Endothelial cell of umbilical vein (primary cell): ENCODE measurements at regions of chr16 and their contacts with region 1.

Region 1: GRCh38 chr16:89410794-89411309 is 79.5 kb downstream of the ANKRD11 start:
- DNase-seq: peak; percentile 97
- H3K4me3 ChIP-seq: no peak overlapping the region
- H3K27ac ChIP-seq: peak overlapping the region; percentile 39
- H3K4me1 ChIP-seq: peaks cover 52% of the 10 kb centered on the region
- H3K27me3 ChIP-seq: no peaks in the 10 kb centered on the region
- CTCF ChIP-seq: peak in 1 of 2 donors; percentile 52
- POLR2A ChIP-seq: peak; percentile 22

Region 2: DNA sequence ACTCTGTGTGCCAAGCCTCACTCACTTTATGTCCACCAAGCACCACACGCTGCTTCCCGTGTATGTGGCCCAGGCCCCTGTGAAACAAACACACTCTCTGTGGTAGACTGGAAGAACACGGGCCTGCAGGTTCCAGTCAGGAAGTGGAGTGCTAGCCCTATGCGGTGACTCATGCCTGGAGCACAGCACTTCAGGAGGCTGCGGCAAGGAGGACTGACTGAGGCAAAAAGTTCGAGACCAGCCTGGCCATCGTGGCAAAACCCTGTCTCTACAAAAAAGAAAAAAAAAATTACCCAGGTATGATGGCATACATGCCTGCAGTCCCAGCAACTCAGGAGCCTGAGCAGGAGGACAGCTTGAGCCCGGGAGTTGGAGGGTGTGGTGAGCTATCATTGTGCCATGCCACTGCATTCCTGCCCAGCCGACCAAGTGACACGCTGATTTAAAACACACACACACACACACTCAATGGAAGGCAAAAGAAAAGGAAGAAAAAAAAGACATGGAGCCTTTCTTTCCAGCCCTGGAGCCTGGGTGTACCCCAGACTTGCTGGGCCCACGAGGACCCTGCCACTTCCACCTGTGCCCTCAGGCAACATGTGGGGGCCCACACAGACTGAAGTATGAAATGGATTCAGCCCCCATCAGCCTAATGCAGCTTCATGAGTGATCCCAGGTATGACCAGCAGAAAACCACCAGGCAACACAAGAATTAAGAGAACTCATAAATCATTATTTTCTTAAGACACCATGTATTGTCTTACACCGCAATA is 47.0 kb before region 1 on chr16:
- CTCF ChIA-PET with region 1: no interaction called
- POLR2A ChIA-PET with region 1: no interaction called
- dilution Hi-C with region 1: no loop called
- intact Hi-C with region 1: loop called (anchors 2 kb)
- DNase-seq: peak; percentile 87
- H3K4me3 ChIP-seq: no peak overlapping the region
- H3K27ac ChIP-seq: peak overlapping the region; percentile 16
- H3K4me1 ChIP-seq: peaks cover 61% of the 10 kb centered on the region
- H3K27me3 ChIP-seq: no peaks in the 10 kb centered on the region
- CTCF ChIP-seq: no peak
- POLR2A ChIP-seq: no peak

Region 3: GRCh38 chr16:89422905-89423630 is 12.2 kb after region 1 on chr16:
- CTCF ChIA-PET with region 1: interaction called, 13 read pairs
- POLR2A ChIA-PET with region 1: interaction called, 3 read pairs
- dilution Hi-C with region 1: no loop called
- intact Hi-C with region 1: no loop called
- DNase-seq: no peak
- H3K4me3 ChIP-seq: peak overlapping the region in 1 of 3 experiments; percentile 37
- H3K27ac ChIP-seq: peak overlapping the region; percentile 85
- H3K4me1 ChIP-seq: peaks cover 42% of the 10 kb centered on the region
- H3K27me3 ChIP-seq: no peaks in the 10 kb centered on the region
- CTCF ChIP-seq: no peak
- POLR2A ChIP-seq: no peak

Region 4: GRCh38 chr16:89507834-89508590 is 97.2 kb after region 1 on chr16 and contains the start of gene SPG7:
- CTCF ChIA-PET with region 1: interaction called, 5 read pairs
- POLR2A ChIA-PET with region 1: no interaction called
- dilution Hi-C with region 1: no loop called
- intact Hi-C with region 1: loop called (anchors 5 kb)
- DNase-seq: peak; percentile 91
- H3K4me3 ChIP-seq: peak within 1 kb of the TSS; percentile 15 to 80 (median 65)
- H3K27ac ChIP-seq: peak within 1 kb of the TSS; percentile 89
- H3K4me1 ChIP-seq: peaks cover 28% of the 10 kb centered on the region
- H3K27me3 ChIP-seq: no peaks in the 10 kb centered on the region
- CTCF ChIP-seq: no peak
- POLR2A ChIP-seq: peak; percentile 86
- total RNA-seq, gene SPG7: 139 and 146 TPM in 2 replicates

Region 5: DNA sequence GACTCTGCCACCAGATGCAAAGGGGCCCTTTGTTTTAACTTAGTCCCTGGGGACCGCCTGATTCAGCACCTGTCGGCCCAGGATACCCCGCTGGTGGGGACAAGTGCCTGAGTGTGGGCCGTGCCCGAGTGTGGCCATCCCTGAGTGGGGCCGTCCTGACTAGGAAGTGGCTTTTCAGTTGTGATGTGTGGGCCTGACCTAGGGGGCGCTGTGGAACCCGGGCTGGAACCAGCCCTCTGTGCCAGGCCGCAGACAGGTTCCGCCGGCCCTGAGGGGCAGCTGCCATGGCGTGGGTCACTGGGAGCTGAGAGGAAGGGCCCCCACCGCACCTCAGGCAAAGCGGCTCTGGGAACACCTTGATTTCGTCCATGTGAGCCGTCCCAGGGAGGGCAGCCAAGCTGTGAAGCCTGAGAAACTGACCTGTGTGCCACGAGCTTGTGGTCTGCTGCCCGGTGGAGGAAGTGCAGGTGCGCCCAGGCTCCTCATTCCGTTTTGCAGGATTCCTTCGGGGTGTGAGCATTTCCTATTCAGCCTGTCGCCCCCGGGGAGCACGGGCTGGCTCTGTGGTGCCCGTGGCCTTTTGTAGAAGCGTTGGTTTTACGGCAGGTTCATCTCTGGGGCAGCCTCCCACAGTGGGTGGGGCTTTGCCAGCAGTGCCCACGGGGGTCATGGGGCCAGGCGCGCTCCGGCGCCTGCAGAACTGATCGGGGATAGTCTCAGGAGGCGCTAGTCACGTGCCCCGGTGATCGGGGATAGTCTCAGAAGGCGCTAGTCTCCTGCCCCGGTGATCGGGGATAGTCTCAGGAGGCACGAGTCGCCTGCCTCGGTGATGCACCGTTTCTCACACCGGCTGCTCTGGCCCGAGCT is 154.9 kb after region 1 on chr16:
- CTCF ChIA-PET with region 1: no interaction called
- POLR2A ChIA-PET with region 1: no interaction called
- dilution Hi-C with region 1: no loop called
- intact Hi-C with region 1: no loop called
- DNase-seq: peak; percentile 57
- H3K4me3 ChIP-seq: peak overlapping the region in 1 of 3 experiments; percentile 18
- H3K27ac ChIP-seq: no peak overlapping the region
- H3K4me1 ChIP-seq: peaks cover 42% of the 10 kb centered on the region
- H3K27me3 ChIP-seq: no peaks in the 10 kb centered on the region
- CTCF ChIP-seq: peak; percentile 75 to 83
- POLR2A ChIP-seq: peak; percentile 25